ENCODE measurements at regions of chr3 and their contacts with region 1.

Region 1: GRCh38 chr3:141998669-141999290 is 122.3 kb downstream of the ATP1B3 start:
- DNase-seq: no peak
- H3K4me3 Mint-ChIP-seq: no peak overlapping the region
- H3K27ac Mint-ChIP-seq: no peak overlapping the region
- H3K4me1 Mint-ChIP-seq: no peaks in the 10 kb centered on the region
- H3K27me3 Mint-ChIP-seq: no peaks in the 10 kb centered on the region
- CTCF ChIP-seq: peak; percentile 36

Region 2: GRCh38 chr3:141460097-141460704 is 538.6 kb before region 1 on chr3:
- CTCF ChIA-PET with region 1: no interaction called
- intact Hi-C with region 1: loop called (anchors 5 kb)
- DNase-seq: peak; percentile 96
- H3K4me3 Mint-ChIP-seq: no peak overlapping the region
- H3K27ac Mint-ChIP-seq: no peak overlapping the region
- H3K4me1 Mint-ChIP-seq: peaks cover 27% of the 10 kb centered on the region
- H3K27me3 Mint-ChIP-seq: no peaks in the 10 kb centered on the region
- CTCF ChIP-seq: peak; percentile 90

Region 3: GRCh38 chr3:141575879-141576743 is 422.7 kb before region 1 on chr3:
- CTCF ChIA-PET with region 1: no interaction called
- intact Hi-C with region 1: loop called (anchors 2 kb)
- DNase-seq: no peak
- H3K4me3 Mint-ChIP-seq: no peak overlapping the region
- H3K27ac Mint-ChIP-seq: no peak overlapping the region
- H3K4me1 Mint-ChIP-seq: no peaks in the 10 kb centered on the region
- H3K27me3 Mint-ChIP-seq: no peaks in the 10 kb centered on the region
- CTCF ChIP-seq: peak; percentile 39

Region 4: GRCh38 chr3:141940204-141940776 is 58.5 kb before region 1 on chr3:
- CTCF ChIA-PET with region 1: no interaction called
- intact Hi-C with region 1: loop called (anchors 1 kb)
- DNase-seq: peak; percentile 93
- H3K4me3 Mint-ChIP-seq: peak overlapping the region; percentile 62
- H3K27ac Mint-ChIP-seq: peak overlapping the region; percentile 66
- H3K4me1 Mint-ChIP-seq: peaks cover 25% of the 10 kb centered on the region
- H3K27me3 Mint-ChIP-seq: no peaks in the 10 kb centered on the region
- CTCF ChIP-seq: peak; percentile 19

Region 5: GRCh38 chr3:141959921-141960554 is 38.7 kb before region 1 on chr3:
- CTCF ChIA-PET with region 1: no interaction called
- intact Hi-C with region 1: loop called (anchors 1 kb)
- DNase-seq: no peak
- H3K4me3 Mint-ChIP-seq: no peak overlapping the region
- H3K27ac Mint-ChIP-seq: no peak overlapping the region
- H3K4me1 Mint-ChIP-seq: no peaks in the 10 kb centered on the region
- H3K27me3 Mint-ChIP-seq: no peaks in the 10 kb centered on the region
- CTCF ChIP-seq: no peak

Measured in Calu3 (cell line).